MCF 10A (cell line): ENCODE measurements at regions of chr11 and their contacts with region 1.

Region 1: GRCh38 chr11:120013325-120014270 is 124.3 kb downstream of the TRIM29 start:
- DNase-seq: peak; percentile 53
- H3K4me3 Mint-ChIP-seq: no peak overlapping the region
- H3K27ac Mint-ChIP-seq: no peak overlapping the region
- H3K4me1 Mint-ChIP-seq: no peaks in the 10 kb centered on the region
- H3K27me3 Mint-ChIP-seq: peaks cover 76% of the 10 kb centered on the region
- CTCF ChIP-seq: peak; percentile 79

Region 2: DNA sequence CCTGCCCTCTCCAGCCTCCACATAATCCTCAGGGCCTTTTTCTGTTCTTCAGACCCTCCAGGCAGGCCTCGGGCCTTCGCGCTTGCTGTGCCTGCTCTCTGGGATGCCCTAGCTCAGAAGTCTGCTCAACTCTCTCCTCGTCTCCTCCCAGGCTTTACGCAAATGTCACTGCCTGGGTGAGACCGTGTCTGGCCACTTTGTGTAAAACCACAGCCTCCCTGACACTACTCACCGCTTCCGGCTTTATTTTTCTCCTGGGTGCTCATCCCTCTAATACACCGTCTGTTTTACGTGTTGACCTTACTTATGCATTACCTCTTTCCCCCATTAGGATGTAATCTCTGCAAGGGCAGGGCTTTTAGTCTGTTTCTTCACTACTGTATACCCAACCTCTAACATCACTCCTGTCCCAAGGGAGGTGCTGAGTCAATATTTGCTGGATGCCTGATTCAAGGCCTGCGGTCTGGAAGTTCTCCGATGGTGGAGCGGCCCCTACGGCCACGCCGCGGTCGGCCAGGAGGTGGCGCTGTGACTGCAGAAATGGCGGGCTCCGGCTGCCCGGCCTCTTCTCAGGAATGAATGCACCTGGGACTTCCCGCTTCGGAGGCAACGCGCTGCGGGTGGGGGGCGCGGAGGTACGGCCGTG is 532.5 kb before region 1 on chr11:
- CTCF ChIA-PET with region 1: interaction called, 3 read pairs
- POLR2A ChIA-PET with region 1: no interaction called
- intact Hi-C with region 1: loop called (anchors 1 kb)
- DNase-seq: peak; percentile 80
- H3K4me3 Mint-ChIP-seq: no peak overlapping the region
- H3K27ac Mint-ChIP-seq: peak overlapping the region; percentile 27
- H3K4me1 Mint-ChIP-seq: peaks cover 7% of the 10 kb centered on the region
- H3K27me3 Mint-ChIP-seq: peaks cover 14% of the 10 kb centered on the region
- CTCF ChIP-seq: peak; percentile 98

Region 3: GRCh38 chr11:119907878-119908572 is 105.6 kb before region 1 on chr11:
- CTCF ChIA-PET with region 1: no interaction called
- POLR2A ChIA-PET with region 1: no interaction called
- intact Hi-C with region 1: no loop called
- DNase-seq: no peak
- H3K4me3 Mint-ChIP-seq: no peak overlapping the region
- H3K27ac Mint-ChIP-seq: no peak overlapping the region
- H3K4me1 Mint-ChIP-seq: no peaks in the 10 kb centered on the region
- H3K27me3 Mint-ChIP-seq: peaks cover 54% of the 10 kb centered on the region
- CTCF ChIP-seq: no peak

Region 4: GRCh38 chr11:120024046-120024445 is 10.4 kb after region 1 on chr11:
- CTCF ChIA-PET with region 1: interaction called, 10 read pairs
- POLR2A ChIA-PET with region 1: no interaction called
- intact Hi-C with region 1: no loop called
- DNase-seq: peak; percentile 12
- H3K4me3 Mint-ChIP-seq: no peak overlapping the region
- H3K27ac Mint-ChIP-seq: no peak overlapping the region
- H3K4me1 Mint-ChIP-seq: peaks cover 5% of the 10 kb centered on the region
- H3K27me3 Mint-ChIP-seq: peaks cover 39% of the 10 kb centered on the region
- CTCF ChIP-seq: no peak